PC-9 (cell line): ENCODE measurements at regions of chr12 and their contacts with region 1.

Region 1: DNA sequence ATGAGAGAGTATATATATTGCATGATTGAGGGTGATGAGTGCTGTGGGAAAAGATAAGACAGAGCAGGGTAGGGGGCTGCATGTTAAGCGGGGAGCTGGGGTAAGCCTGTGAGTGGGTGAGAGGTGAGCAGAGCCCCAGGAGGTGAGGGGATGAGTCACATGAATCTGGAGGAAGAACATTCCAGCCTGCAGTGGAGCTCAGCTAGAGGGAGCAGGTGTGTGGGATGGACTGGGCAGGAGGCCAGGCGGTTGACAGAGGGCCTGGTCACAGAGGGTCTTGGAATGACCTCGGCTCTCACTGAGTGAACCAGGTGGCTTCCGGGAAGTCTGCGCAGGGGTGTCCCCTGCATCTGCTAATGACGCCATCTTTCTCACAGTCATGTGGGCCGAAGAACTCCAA is 44.4 kb downstream of the GIT2 start:
- DNase-seq: peak; percentile 85 to 88
- H3K4me3 ChIP-seq: 0 out of 2 replicates have a peak overlapping the region, but pooled peaks have one; percentile 9
- H3K27ac ChIP-seq: peak overlapping the region; percentile 91
- H3K4me1 ChIP-seq: peaks cover 32% of the 10 kb centered on the region
- H3K27me3 ChIP-seq: no peaks in the 10 kb centered on the region
- CTCF ChIP-seq: no peak

Region 2: GRCh38 chr12:109963743-109964429 is 12.1 kb after region 1 on chr12:
- CTCF ChIA-PET with region 1: no interaction called
- POLR2A ChIA-PET with region 1: interaction called, 11 read pairs
- intact Hi-C with region 1: no loop called
- DNase-seq: no peak
- H3K4me3 ChIP-seq: no peak overlapping the region
- H3K27ac ChIP-seq: no peak overlapping the region
- H3K4me1 ChIP-seq: peaks cover 19% of the 10 kb centered on the region
- H3K27me3 ChIP-seq: no peaks in the 10 kb centered on the region
- CTCF ChIP-seq: no peak

Region 3: GRCh38 chr12:109998904-109999857 is 47.4 kb after region 1 on chr12 and contains the start of gene ANKRD13A:
- CTCF ChIA-PET with region 1: interaction called, 5 read pairs
- POLR2A ChIA-PET with region 1: no interaction called
- intact Hi-C with region 1: loop called (anchors 5 kb)
- DNase-seq: peak; percentile 76 to 84
- H3K4me3 ChIP-seq: peak within 1 kb of the TSS; percentile 68
- H3K27ac ChIP-seq: peak within 1 kb of the TSS; percentile 53; the same call in 1 of the 2 replicates
- H3K4me1 ChIP-seq: peaks cover 54% of the 10 kb centered on the region
- H3K27me3 ChIP-seq: no peaks in the 10 kb centered on the region
- CTCF ChIP-seq: no peak
- total RNA-seq, gene ANKRD13A: 61.8 and 66.9 TPM in 2 replicates